GM12878 (cell line): ENCODE measurements at regions of chr15 and their contacts with region 1.

Region 1: DNA sequence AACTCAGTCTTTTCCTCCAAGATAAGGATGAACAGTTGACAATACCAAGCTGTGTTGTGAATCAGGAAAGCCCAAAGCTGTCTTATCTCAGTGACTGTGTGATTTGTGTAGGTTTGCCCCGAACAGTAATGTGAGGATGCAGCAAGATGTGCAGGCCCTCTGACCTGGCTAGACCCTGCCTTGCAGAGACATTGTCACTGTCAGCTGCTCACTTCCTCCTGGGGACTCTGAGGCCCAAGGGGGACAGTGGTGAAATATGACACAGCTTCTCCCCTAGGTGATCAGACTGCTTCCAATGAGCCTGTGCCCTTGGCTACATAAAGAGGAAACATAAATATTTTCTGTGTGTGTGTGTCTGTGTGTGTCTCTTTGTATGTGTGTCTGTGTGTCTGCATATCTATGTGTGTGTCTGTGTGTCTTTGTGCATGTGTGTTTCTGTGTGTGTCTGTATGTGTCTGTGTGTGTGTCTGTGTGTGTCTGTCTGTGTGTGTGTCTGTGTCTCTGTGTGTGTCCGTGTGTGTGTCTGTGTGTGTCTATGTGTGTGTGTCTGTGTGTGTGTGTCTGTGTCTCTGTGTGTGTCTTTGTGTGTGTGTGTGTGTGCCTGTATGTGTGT is 21.7 kb downstream of the LRRK1 start:
- DNase-seq: no peak
- ATAC-seq: peak; percentile 87
- H3K4me3 ChIP-seq: peak overlapping the region; percentile 31; the same call in 1 of the 2 replicates
- H3K27ac ChIP-seq: peak overlapping the region; percentile 85
- H3K4me1 ChIP-seq: peaks cover 38% of the 10 kb centered on the region
- H3K27me3 ChIP-seq: no peaks in the 10 kb centered on the region
- CTCF ChIP-seq: no peak
- EP300 ChIP-seq: peak; percentile 13 to 32; a peak in 1 of 4 replicates
- POLR2A ChIP-seq: peak; percentile 47
- RAD21 ChIP-seq: no peak

Region 2: DNA sequence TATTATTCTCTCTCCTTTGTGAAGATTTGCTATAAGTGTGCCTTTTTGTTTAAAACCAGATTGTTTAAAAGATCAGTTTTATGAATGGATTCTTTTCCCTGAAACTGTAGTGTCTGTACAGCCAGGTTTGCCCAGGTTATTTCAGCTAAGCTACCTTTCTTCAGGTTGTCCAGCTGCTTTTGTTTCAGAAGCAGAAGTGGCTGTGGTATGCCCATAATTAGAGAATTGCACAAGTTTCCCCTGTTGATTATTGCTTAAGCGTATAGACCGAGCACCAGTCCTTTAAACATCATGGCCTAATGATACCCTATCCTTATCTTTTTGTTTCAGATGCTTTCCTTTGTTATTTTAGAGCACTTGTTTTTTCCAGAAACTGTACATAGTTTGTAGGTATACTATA is 328.3 kb before region 1 on chr15:
- CTCF ChIA-PET with region 1: no interaction called
- POLR2A ChIA-PET with region 1: no interaction called
- RAD21 ChIA-PET with region 1: no interaction called
- SMC1A ChIA-PET with region 1: no interaction called
- in situ Hi-C with region 1: no loop called
- intact Hi-C with region 1: no loop called
- DNase-seq: no peak
- ATAC-seq: no peak
- H3K4me3 ChIP-seq: no peak overlapping the region
- H3K27ac ChIP-seq: no peak overlapping the region
- H3K4me1 ChIP-seq: no peaks in the 10 kb centered on the region
- H3K27me3 ChIP-seq: no peaks in the 10 kb centered on the region
- CTCF ChIP-seq: no peak
- EP300 ChIP-seq: no peak
- POLR2A ChIP-seq: no peak
- RAD21 ChIP-seq: no peak

Region 3: GRCh38 chr15:100740138-100740537 is 200.7 kb before region 1 on chr15:
- CTCF ChIA-PET with region 1: no interaction called
- POLR2A ChIA-PET with region 1: no interaction called
- RAD21 ChIA-PET with region 1: no interaction called
- SMC1A ChIA-PET with region 1: no interaction called
- in situ Hi-C with region 1: no loop called
- intact Hi-C with region 1: no loop called
- DNase-seq: no peak
- ATAC-seq: no peak
- H3K4me3 ChIP-seq: no peak overlapping the region
- H3K27ac ChIP-seq: no peak overlapping the region
- H3K4me1 ChIP-seq: no peaks in the 10 kb centered on the region
- H3K27me3 ChIP-seq: no peaks in the 10 kb centered on the region; a peak in 2 of 4 replicates
- CTCF ChIP-seq: no peak
- EP300 ChIP-seq: no peak
- POLR2A ChIP-seq: no peak
- RAD21 ChIP-seq: no peak

Region 4: GRCh38 chr15:100929641-100930042 is 11.2 kb before region 1 on chr15:
- CTCF ChIA-PET with region 1: interaction called, 39 read pairs
- POLR2A ChIA-PET with region 1: interaction called, 97 read pairs
- RAD21 ChIA-PET with region 1: interaction called, 76 read pairs
- SMC1A ChIA-PET with region 1: interaction called, 55 read pairs
- in situ Hi-C with region 1: no loop called
- intact Hi-C with region 1: loop called (anchors 2 kb)
- DNase-seq: no peak
- ATAC-seq: peak; percentile 39
- H3K4me3 ChIP-seq: no peak overlapping the region
- H3K27ac ChIP-seq: peak overlapping the region; percentile 81
- H3K4me1 ChIP-seq: peaks cover 74% of the 10 kb centered on the region
- H3K27me3 ChIP-seq: no peaks in the 10 kb centered on the region
- CTCF ChIP-seq: no peak
- EP300 ChIP-seq: no peak
- POLR2A ChIP-seq: 0 out of 2 replicates have a peak, but pooled peaks have one; percentile 34
- RAD21 ChIP-seq: no peak

Region 5: DNA sequence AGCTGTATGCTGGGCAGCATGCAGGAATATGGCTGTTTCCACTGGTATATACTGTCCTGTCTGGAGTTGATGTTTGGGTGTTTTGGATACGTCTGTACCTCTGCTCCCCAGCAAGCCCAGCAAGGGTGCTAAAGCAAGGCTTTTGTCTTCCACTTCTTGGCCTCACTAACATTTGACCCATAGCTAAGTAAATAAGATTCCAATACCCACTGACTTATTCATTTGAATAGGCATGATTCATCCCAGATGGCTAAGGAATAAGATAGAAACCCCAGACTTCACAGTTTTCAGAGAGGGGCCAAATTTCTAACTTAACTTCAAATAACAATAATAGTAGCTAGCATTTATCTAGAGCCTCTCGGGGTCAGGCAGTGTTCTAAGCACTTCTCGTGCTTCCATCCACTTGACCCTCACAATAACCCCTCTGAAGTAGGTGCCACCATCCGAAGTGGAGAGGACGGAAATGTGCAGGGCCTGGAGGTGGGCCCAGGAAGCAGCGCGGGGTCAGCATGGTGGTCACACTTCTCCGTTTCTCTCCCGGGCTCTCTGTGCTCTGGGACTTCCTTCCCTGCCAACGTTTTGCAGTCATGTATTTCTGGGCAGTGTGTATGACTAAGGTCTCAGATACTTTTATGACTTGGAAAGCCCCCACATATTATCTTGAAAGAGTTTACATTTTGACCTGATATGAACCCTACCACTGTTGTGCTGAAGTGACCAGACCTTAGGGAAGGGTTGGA is 17.6 kb after region 1 on chr15:
- CTCF ChIA-PET with region 1: interaction called, 12 read pairs
- POLR2A ChIA-PET with region 1: interaction called, 4 read pairs
- RAD21 ChIA-PET with region 1: interaction called, 15 read pairs
- SMC1A ChIA-PET with region 1: interaction called, 11 read pairs
- in situ Hi-C with region 1: no loop called
- intact Hi-C with region 1: no loop called
- DNase-seq: no peak
- ATAC-seq: peak; percentile 87
- H3K4me3 ChIP-seq: no peak overlapping the region
- H3K27ac ChIP-seq: peak overlapping the region; percentile 17
- H3K4me1 ChIP-seq: peaks cover 10% of the 10 kb centered on the region
- H3K27me3 ChIP-seq: no peaks in the 10 kb centered on the region
- CTCF ChIP-seq: no peak
- EP300 ChIP-seq: no peak
- POLR2A ChIP-seq: no peak
- RAD21 ChIP-seq: no peak

Region 6: GRCh38 chr15:100968050-100968966 is 27.4 kb after region 1 on chr15:
- CTCF ChIA-PET with region 1: interaction called, 10 read pairs
- POLR2A ChIA-PET with region 1: interaction called, 12 read pairs
- RAD21 ChIA-PET with region 1: interaction called, 24 read pairs
- SMC1A ChIA-PET with region 1: interaction called, 36 read pairs
- in situ Hi-C with region 1: no loop called
- intact Hi-C with region 1: loop called (anchors 1 kb)
- DNase-seq: peak; percentile 30
- ATAC-seq: peak; percentile 88
- H3K4me3 ChIP-seq: no peak overlapping the region
- H3K27ac ChIP-seq: no peak overlapping the region
- H3K4me1 ChIP-seq: peaks cover 7% of the 10 kb centered on the region
- H3K27me3 ChIP-seq: no peaks in the 10 kb centered on the region
- CTCF ChIP-seq: no peak
- EP300 ChIP-seq: no peak
- POLR2A ChIP-seq: no peak
- RAD21 ChIP-seq: no peak